Right cardiac atrium (tissue), 5 donors: ENCODE measurements at regions of chr7 and their contacts with region 1.

Region 1: DNA sequence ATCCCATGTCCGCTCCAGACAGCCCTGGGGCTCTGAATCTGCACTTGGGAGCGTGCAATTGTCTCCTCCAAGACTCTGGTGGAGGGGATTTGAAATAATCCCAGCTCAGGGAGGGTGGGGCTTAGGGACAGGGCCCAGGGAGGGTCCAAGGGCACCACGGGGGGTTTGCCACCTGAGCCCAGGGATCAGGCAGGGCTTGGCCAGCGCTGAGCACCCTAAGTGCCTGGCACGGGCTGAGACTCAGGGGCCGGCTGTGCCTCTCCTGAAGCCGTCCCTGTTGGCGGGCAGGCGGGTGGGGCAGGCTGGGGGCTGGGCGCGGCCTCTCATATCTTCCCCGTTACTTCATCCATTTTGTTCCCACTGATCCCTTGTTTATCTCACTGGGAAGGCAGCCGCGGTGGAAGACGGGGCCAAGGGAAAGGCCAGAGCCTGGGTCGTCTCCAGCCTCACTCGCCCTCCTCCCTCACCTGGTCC is 41.8 kb upstream of the ELN start:
- DNase-seq: peak; percentile 85 to 95 (median 93)
- ATAC-seq: peak; percentile 80
- H3K4me3 ChIP-seq: no peak overlapping the region
- H3K27ac ChIP-seq: peak overlapping the region; percentile 91
- H3K4me1 ChIP-seq: no peaks in the 10 kb centered on the region
- H3K27me3 ChIP-seq: no peaks in the 10 kb centered on the region

Region 2: GRCh38 chr7:73758581-73759138 is 227.5 kb before region 1 on chr7:
- intact Hi-C with region 1: no loop called
- DNase-seq: no peak
- ATAC-seq: no peak
- H3K4me3 ChIP-seq: no peak overlapping the region
- H3K27ac ChIP-seq: no peak overlapping the region
- H3K4me1 ChIP-seq: no peaks in the 10 kb centered on the region
- H3K27me3 ChIP-seq: no peaks in the 10 kb centered on the region

Region 3: DNA sequence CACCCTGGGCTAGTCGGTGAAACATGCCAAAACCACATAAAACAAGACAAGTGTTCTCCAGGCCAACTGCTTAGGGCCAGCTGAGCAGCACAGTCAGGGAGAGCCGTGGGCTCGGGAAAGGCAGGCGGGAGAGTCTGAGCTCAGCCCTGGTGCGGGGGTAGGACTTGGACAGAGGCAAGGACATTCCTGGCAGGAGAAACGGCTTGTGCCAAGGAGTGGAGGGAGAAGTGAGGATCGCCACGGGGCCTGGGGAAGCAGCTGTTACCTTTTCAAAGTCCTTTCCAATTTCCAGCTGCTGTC is 45.9 kb after region 1 on chr7:
- intact Hi-C with region 1: loop called in 2 of 4 experiments (anchors 5 kb)
- DNase-seq: peak; percentile 62 to 78 (median 69)
- ATAC-seq: no peak
- H3K4me3 ChIP-seq: peak overlapping the region; percentile 7
- H3K27ac ChIP-seq: peak overlapping the region; percentile 59
- H3K4me1 ChIP-seq: peaks cover 3% of the 10 kb centered on the region
- H3K27me3 ChIP-seq: no peaks in the 10 kb centered on the region